Posterior vena cava (tissue), 2 donors: ENCODE measurements at regions of chr21 and their contacts with region 1.

Region 1: DNA sequence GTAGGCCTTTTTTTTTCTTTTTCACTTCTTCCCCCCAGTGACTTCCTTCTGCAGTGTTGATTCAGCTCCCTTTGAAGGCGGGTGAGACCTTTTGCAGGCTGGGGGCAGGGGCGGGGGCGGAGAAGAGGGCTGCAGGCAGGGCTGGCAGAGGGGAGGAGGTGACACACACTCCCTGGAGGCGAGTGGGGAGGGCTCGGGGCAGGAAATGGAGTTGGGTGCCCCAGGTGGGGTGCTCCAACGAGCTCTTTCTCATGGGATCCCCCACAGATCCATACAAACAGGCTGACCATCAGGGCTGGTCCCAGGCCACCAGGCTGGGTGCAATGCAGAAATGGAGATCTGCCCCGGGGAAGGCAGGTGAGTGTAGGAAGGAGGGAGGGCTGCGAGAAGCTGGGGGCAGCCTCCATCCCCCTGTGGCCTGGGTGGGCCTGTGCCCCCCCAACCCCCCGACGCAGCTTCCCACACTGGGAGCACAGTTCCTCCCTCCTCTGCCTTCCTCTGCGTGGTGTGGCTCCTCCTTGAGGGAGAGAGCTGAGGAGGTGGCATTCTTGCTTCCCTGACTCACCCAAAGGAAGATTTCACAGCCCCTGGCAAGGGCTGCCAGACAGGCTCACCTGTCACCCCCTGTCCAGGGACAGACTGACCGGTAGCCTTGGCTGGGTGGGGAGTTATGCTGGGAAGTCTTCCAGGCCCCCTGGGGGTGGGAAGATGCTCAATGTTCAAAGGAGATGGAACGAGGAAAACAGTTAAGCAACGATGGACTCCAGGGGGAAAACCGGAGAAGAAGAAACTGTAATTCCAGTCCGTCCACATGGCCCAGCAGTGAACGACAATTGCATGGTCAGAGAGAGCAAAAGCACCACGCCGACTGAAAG is 7.1 kb upstream of the ITGB2 start:
- DNase-seq: no peak

Region 2: DNA sequence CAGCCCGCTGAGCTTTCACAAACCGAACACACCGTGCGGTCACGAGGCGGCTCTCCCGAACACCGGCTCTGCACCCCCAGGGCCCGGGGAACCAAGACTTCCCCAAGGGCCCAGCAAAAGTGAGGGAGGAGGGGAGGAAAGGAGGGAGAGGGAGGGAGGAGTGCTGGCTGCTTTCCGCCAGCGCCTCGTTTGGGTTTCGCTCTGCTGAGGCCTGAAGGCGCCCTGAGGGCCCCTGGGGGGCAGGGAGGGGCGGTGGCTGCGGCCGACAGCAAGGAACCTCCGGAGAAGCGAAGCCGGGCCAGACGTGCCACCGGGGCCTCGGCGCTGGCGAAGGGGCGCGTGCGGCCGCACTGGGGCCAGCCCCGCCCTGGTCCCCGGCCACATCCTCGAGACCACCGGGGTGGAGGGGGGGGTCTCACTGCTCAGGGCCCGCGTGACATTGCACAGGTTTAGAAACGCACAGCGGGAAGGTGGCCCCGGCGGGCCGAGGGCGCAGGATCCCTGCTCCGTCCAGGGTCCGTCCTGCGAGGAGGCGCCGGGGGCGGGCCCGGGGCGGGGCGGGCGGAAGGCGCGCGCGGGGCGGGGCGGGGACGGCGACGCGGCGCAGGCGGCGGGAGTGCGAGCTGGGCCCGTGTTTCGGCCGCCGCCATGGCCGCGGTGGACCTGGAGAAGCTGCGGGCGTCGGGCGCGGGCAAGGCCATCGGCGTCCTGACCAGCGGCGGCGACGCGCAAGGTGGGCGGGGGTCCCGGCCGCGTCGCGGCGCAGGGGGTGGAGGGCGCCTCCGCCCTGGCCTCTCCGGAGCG is 628.2 kb before region 1 on chr21 and contains the start of gene PFKL:
- intact Hi-C with region 1: loop called in 1 of 2 experiments (anchors 10 kb)
- DNase-seq: peak; percentile 89
- total RNA-seq, gene PFKL: 74.1 to 91.3 TPM

Region 3: DNA sequence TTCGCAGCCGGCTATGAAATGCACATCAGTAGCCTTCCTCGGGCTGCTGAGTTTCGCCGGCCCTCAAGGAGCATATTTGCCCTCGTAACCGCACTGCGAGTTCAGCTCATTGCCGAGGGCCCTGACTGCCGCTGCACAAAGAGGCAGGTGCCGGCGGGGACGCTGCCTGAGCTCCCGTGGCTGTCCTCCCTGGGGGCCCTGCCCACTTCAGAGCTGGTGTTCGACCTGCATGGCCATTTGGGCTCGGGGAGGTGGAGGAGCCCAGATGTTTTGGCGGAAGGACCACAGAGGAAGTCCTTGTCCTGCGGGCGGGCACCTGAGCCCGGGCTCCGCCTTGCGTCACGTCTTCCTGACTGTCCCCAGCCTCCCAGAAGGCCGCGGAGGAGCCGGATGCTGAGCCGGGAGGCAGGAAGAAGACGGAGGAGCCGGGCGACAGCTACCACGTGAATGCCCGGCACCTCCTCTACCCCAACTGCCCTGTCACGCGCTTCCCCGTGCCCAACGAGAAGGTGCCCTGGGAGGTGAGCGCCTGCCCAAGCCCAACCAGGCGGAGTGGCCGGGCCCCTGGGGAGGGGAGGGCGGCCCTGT is 502.4 kb before region 1 on chr21:
- intact Hi-C with region 1: no loop called
- DNase-seq: peak; percentile 83

Region 4: DNA sequence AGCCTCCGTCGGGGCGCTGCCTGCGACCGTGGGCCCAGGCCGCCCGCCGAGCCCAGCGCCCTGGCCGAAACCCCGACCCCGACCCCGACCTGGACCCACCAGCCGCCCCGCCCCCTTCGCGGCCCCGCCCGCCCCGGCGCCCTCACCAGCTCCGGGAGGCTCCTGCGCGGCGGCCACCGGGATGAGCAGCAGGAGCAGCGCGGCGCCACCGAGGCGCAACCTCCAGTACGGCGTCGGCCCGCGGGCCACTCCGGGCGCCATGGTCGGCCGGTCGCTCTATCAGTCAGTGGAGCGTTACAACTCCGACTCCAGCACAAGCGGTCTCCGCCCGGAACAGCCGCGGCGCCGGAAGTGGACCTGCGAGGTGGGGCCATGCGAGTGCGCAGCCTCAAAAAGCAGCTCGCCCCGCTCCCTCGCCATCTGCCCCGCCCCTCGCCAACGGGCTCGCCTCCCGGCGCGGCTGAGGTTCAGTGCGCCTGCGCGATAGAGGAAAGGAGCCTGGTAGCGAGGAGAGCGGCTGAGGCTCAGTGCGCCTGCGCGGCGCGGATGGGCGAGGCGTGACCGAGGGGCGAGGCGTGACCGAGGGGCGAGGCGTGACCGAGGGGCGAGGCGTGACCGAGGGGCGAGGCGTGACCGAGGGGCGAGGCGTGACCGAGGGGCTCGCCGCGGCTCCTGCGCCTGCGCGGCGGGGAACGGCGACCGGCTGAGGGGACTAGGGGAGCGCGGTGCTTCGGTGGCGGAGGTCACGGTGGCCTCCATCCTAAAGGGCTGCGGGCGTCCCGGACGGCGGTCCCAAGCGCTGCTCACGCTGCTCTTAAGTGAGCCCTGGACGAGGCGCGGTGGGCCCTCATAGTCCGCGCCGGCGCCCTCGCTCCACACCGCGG is 54.2 kb before region 1 on chr21 and contains the start of gene PTTG1IP:
- intact Hi-C with region 1: loop called in 1 of 2 experiments (anchors 10 kb)
- DNase-seq: peak; percentile 100
- total RNA-seq, gene PTTG1IP: 202 to 246 TPM

Region 5: DNA sequence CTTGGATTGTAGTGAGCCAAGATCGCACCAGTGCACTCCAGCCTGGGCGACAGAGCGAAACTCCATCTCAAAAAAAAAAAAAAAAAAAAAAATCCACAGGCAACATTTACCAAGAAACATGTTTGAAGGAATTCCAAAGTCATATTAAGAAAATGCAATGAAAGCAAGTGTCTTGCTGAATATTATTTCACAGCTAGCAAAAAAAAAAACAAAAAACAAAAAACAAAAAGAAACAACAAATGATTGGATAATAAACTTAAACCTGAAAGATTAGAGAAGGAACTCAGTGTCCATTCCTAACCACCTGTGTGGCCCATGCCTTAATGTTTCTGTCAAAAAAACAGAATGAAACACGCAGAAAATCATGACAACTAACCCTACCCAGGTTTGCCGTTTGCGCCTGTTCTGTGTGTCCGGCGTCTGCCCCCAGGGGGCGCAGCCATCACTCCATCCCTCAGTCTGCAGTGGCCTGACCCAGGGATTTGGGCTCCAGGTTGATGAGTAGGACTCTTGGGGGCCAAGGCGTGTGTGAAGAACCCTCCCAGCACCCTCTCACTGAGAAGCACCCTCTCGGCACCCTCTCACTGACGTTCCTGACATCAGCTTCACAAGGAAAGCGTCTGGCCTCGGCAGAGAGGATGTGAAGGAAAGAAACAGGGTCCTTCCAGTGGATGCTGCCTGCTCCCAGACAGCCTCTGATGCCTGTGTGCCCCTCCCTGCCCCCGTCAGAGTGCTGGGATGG is 35.1 kb before region 1 on chr21:
- intact Hi-C with region 1: loop called in 1 of 2 experiments (anchors 5 kb)
- DNase-seq: peak; percentile 88

Region 6: DNA sequence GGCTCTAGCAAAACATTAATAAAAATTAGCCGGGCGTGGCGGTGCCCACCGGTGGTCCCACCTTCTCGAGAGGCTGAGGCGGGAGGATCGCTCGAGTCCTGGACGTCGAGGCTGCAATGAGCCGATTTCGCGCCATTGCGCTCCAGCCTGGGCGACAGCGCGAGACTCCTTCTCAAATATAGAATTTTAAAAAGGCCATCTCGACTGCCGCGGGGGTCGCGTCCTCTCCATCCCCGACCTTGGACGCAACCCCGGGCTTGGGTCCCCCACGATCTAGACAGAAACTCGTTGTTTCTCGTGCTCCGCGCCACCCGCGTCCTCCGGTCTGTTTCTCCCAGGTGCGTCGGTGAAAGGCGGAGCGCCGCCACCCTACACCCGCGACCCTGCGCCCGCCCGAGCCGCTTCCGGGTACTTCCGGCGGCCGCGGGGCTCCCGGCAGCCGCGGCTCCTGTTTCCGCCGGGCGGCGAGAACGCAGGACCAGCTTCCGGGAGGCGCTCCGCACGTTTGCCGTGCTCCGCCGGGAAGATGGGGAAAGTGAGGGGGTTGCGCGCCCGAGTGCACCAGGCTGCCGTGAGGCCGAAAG is 11.8 kb after region 1 on chr21 and contains the start of gene SLX9:
- intact Hi-C with region 1: no loop called
- DNase-seq: peak; percentile 94
- total RNA-seq, gene SLX9: 25.8 to 31.6 TPM